CD4-positive, alpha-beta T cell (primary cell): ENCODE measurements at regions of chr2 and their contacts with region 1.

Region 1: GRCh38 chr2:160406591-160407392 is 86.8 kb downstream of the RBMS1 start:
- DNase-seq: peak; percentile 57 to 97 (median 68)
- ATAC-seq: peak; percentile 84
- H3K4me3 ChIP-seq: peak overlapping the region; percentile 73
- H3K4me3 Mint-ChIP-seq: peak overlapping the region; percentile 89
- H3K27ac ChIP-seq: peak overlapping the region; percentile 55 to 96
- H3K27ac Mint-ChIP-seq: peak overlapping the region; percentile 90
- H3K4me1 ChIP-seq: peaks cover 55% of the 10 kb centered on the region
- H3K4me1 Mint-ChIP-seq: peaks cover 86% of the 10 kb centered on the region
- H3K27me3 ChIP-seq: no peaks in the 10 kb centered on the region
- H3K27me3 Mint-ChIP-seq: no peaks in the 10 kb centered on the region
- CTCF ChIP-seq: no peak

Region 2: DNA sequence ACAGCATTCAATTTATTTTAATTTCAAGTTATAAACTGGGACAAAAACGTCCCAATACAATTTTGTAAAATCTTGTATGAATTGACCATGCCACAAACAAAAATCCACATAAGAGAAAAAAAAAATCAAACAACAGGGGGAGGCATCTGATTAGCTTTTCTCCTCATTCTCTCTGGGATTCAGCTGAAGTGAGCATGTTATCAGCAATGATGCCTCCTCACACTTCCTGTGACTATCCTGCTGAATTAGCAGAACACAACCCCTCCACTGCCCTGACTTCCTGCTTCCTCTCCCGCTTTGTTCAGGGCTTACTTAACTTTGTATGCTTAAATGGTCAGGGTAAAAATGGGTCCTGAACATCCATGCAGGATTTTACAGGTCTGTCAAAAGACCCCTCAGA is 74.5 kb before region 1 on chr2:
- CTCF ChIA-PET with region 1: no interaction called
- POLR2A ChIA-PET with region 1: interaction called, 3 read pairs
- intact Hi-C with region 1: loop called in 1 of 2 experiments (anchors 5 kb)
- DNase-seq: peak in 5 of 14 experiments; percentile 8 to 59 (median 51)
- ATAC-seq: peak; percentile 50
- H3K4me3 ChIP-seq: no peak overlapping the region
- H3K4me3 Mint-ChIP-seq: peak overlapping the region; percentile 57
- H3K27ac ChIP-seq: no peak overlapping the region
- H3K27ac Mint-ChIP-seq: peak overlapping the region; percentile 50
- H3K4me1 ChIP-seq: peaks cover 52% of the 10 kb centered on the region
- H3K4me1 Mint-ChIP-seq: peaks cover 95% of the 10 kb centered on the region
- H3K27me3 ChIP-seq: no peaks in the 10 kb centered on the region
- H3K27me3 Mint-ChIP-seq: no peaks in the 10 kb centered on the region
- CTCF ChIP-seq: no peak

Region 3: DNA sequence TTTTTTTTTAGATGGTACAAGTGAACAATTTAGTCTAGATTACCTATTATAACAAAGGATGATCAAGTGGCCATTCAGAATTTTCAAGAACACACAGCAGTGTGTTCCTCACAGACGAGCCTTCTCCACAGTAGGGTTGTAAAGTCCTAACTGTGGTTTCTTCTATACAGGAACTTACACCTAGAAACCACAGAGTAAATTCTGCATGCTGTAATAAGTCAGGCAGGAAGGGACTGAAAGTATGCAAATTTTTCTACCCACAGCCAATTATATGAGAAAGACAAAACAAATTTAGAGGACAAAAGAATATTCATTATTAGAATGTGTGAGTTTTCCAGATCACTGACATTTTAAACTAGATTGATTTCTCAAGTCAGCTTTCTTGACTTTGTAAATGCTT is 12.6 kb before region 1 on chr2:
- CTCF ChIA-PET with region 1: no interaction called
- POLR2A ChIA-PET with region 1: interaction called, 18 read pairs
- intact Hi-C with region 1: loop called in 1 of 2 experiments (anchors 1 kb)
- DNase-seq: peak in 3 of 14 experiments; percentile 66 to 81 (median 70)
- ATAC-seq: peak; percentile 94
- H3K4me3 ChIP-seq: no peak overlapping the region
- H3K4me3 Mint-ChIP-seq: peak overlapping the region; percentile 15
- H3K27ac ChIP-seq: no peak overlapping the region
- H3K27ac Mint-ChIP-seq: peak overlapping the region; percentile 64
- H3K4me1 ChIP-seq: peaks cover 63% of the 10 kb centered on the region
- H3K4me1 Mint-ChIP-seq: peaks cover 59% of the 10 kb centered on the region
- H3K27me3 ChIP-seq: no peaks in the 10 kb centered on the region
- H3K27me3 Mint-ChIP-seq: no peaks in the 10 kb centered on the region
- CTCF ChIP-seq: no peak

Region 4: GRCh38 chr2:160474891-160475787 is 68.3 kb after region 1 on chr2:
- CTCF ChIA-PET with region 1: no interaction called
- POLR2A ChIA-PET with region 1: interaction called, 6 read pairs
- intact Hi-C with region 1: loop called in 1 of 2 experiments (anchors 5 kb)
- DNase-seq: no peak
- ATAC-seq: no peak
- H3K4me3 ChIP-seq: no peak overlapping the region
- H3K4me3 Mint-ChIP-seq: peak overlapping the region; percentile 86
- H3K27ac ChIP-seq: peak overlapping the region in 1 of 2 donors; percentile 71
- H3K27ac Mint-ChIP-seq: peak overlapping the region; percentile 91
- H3K4me1 ChIP-seq: peaks cover 23% of the 10 kb centered on the region
- H3K4me1 Mint-ChIP-seq: peaks cover 90% of the 10 kb centered on the region
- H3K27me3 ChIP-seq: no peaks in the 10 kb centered on the region
- H3K27me3 Mint-ChIP-seq: no peaks in the 10 kb centered on the region
- CTCF ChIP-seq: no peak

Region 5: DNA sequence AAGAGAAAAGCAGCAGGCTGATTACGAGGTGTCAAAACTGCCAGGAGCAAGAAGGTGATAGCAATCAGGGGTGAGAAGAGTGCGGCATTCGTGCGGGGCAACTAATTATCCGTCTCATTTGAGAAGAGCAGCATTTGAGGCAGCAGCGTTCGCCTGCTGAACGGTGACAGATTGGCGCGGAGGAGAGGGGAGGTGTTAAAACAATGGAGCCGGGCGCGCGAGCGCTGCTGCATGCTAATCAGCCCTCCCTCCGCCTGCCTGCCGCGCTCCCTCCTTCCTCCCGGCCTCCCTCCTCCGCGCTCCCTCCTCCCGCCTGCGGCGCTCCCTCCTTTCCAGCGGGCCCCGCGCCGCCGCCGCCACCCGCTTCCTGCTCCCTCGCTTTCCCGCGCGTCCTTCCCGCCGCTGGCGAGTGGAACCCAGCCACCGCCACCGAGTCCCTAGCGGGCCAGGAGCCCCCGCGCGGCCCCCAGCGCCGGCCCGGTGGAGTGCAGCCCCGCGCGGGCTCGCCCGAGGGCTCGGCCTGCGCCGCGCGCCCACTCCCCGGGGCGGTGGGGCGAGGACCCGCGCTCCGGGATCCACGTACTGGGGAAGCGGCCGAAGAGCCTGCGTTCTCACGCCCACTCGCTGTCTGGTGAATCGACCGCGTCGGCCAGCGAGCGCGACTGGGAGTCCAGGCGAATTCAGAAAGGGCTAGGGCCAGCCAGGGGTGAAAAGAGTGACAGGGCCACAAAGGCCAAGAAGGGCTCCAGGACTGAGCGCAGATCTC is 832.0 kb after region 1 on chr2:
- CTCF ChIA-PET with region 1: no interaction called
- POLR2A ChIA-PET with region 1: no interaction called
- intact Hi-C with region 1: loop called in 1 of 2 experiments (anchors 10 kb)
- DNase-seq: peak; percentile 40 to 83 (median 56)
- ATAC-seq: peak; percentile 75
- H3K4me3 ChIP-seq: peak overlapping the region; percentile 56
- H3K4me3 Mint-ChIP-seq: peak overlapping the region; percentile 90
- H3K27ac ChIP-seq: no peak overlapping the region
- H3K27ac Mint-ChIP-seq: peak overlapping the region; percentile 70
- H3K4me1 ChIP-seq: peaks cover 30% of the 10 kb centered on the region
- H3K4me1 Mint-ChIP-seq: peaks cover 61% of the 10 kb centered on the region
- H3K27me3 ChIP-seq: no peaks in the 10 kb centered on the region
- H3K27me3 Mint-ChIP-seq: no peaks in the 10 kb centered on the region
- CTCF ChIP-seq: no peak